Breast epithelium (tissue), 4 donors: ENCODE measurements at regions of chr1 and their contacts with region 1.

Region 1: DNA sequence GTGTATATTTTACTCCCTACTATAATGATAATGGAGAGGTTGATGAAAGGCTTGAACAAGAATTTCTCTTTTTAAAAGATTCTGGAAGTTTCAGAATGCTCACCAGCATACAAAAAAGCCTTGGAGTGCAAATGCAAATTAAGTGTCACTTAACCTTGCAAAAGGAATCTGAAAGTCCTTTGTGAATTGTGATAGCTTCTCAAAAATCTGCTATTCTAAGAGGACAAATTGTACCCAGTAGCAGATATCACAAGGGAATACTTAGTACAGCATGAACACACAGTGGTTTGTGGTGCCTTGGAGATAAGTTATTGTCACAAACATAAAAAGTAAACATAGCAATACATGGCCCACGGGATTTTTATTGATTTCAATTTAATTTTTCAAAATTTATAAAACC is 1208.3 kb upstream of the B3GALT2 start:
- DNase-seq: no peak
- H3K4me3 ChIP-seq: no peak overlapping the region
- H3K27ac ChIP-seq: no peak overlapping the region
- H3K4me1 ChIP-seq: no peaks in the 10 kb centered on the region
- H3K27me3 ChIP-seq: no peaks in the 10 kb centered on the region
- CTCF ChIP-seq: no peak
- POLR2A ChIP-seq: no peak

Region 2: GRCh38 chr1:194410756-194411155 is 16.1 kb after region 1 on chr1:
- intact Hi-C with region 1: loop called (anchors 2 kb)
- DNase-seq: no peak
- H3K4me3 ChIP-seq: no peak overlapping the region
- H3K27ac ChIP-seq: no peak overlapping the region
- H3K4me1 ChIP-seq: no peaks in the 10 kb centered on the region
- H3K27me3 ChIP-seq: no peaks in the 10 kb centered on the region
- CTCF ChIP-seq: no peak
- POLR2A ChIP-seq: no peak

Region 3: DNA sequence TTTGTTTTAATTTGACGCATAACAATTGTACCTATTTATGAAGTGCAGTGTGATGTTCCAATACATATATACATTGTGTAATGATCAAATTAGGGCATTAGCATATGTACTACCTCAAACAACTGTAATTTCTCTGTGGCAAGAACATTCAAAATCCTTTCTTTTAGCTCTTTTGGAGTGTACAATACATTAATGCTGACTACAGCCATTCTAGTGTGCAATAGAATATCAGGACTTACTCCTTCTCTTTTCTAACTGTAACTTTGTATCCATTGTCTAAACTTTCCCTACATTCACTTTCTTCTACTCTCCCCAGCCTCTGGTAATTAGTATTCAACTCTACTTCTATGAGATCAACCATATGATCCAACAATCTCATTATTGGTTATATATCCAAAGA is 1036.2 kb after region 1 on chr1:
- intact Hi-C with region 1: no loop called
- DNase-seq: no peak
- H3K4me3 ChIP-seq: no peak overlapping the region
- H3K27ac ChIP-seq: no peak overlapping the region
- H3K4me1 ChIP-seq: no peaks in the 10 kb centered on the region
- H3K27me3 ChIP-seq: no peaks in the 10 kb centered on the region
- CTCF ChIP-seq: no peak
- POLR2A ChIP-seq: no peak